ENCODE measurements at regions of chr1 and their contacts with region 1.

Region 1: GRCh38 chr1:24635195-24635843 is 7.8 kb upstream of the SRRM1 start:
- DNase-seq: peak; percentile 26
- H3K4me3 ChIP-seq: no peak overlapping the region
- H3K27me3 ChIP-seq: no peaks in the 10 kb centered on the region
- CTCF ChIP-seq: peak; percentile 73

Region 2: DNA sequence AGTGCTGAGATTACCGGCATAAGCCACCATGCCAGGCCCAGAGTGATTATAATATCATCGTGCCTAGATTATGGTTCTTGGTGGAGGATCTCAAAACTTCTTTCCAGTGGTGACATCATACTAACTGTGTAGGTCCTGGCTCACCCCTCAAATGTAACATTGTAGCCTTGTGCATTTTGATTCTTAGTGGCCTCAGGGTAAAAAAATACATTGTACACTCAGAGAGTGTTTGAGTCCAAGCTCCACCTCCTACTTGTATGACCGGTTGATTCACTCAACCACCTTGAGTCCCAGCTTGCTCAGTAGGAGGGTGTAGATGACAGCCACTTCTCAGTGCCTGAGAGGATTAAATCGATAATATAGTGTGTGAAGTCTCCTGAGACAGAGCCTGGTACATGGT is 41.2 kb before region 1 on chr1:
- CTCF ChIA-PET with region 1: interaction called, 40 read pairs
- POLR2A ChIA-PET with region 1: no interaction called
- DNase-seq: no peak
- H3K4me3 ChIP-seq: no peak overlapping the region
- H3K27me3 ChIP-seq: no peaks in the 10 kb centered on the region; the same call in 1 of the 2 replicates
- CTCF ChIP-seq: no peak

Region 3: DNA sequence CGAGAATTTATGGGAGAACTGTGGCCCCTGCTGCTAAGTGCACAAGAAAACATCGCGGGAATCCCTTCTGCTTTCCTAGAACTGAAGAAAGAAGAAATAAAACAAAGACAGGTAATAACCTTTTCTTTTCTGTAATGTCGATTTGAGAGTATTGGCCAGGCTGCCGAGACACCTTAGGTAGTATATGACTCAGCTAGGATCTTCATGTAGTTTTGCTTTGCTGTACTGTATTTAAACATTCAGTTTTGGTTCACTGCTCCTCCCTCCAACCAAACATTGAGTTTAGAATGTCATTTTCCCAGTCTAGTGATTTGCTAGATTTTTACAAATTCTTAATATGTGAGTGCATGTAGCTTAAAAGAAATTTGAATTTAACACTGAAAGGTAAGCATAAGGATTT is 13.6 kb after region 1 on chr1:
- CTCF ChIA-PET with region 1: no interaction called
- POLR2A ChIA-PET with region 1: no interaction called
- DNase-seq: no peak
- H3K4me3 ChIP-seq: no peak overlapping the region
- H3K27me3 ChIP-seq: no peaks in the 10 kb centered on the region
- CTCF ChIP-seq: no peak

Measured in BJ (cell line).